ENCODE measurements at regions of chr19 and their contacts with region 1.

Region 1: DNA sequence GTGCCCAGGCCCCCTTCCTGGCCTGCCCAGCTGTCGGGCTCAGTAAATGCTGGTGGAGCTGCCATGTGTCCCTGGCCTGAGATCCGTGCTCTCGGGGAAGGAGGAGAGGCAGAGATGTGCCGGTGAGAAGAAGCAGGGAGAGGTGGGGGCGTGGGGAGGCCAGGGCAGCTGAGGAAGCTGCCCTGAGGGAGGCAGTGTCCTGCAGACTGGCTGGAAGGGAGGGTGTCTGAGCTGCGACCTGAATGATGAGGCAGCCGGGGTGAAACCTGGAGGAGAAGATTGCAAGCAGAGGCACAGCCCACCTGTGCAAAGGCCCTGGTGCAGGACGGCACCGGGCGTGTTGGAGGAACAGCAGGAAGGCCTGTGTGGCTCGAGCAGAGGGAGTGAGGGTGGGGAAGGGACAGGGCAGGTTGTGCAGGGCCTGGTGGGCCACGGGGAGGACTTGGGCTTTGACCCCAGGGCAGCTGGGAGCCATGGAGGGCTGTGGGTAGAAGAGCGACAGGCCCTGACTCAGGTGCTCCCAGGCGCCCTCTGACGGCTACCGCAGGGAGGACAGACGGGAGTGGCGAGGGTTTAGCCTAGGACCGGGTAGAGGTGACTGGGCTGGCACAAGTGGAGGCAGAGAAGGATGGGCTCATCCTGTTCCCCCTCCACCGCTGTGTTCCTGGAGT is 14.0 kb upstream of the CELF5 start:
- DNase-seq: peak; percentile 35 to 60
- ATAC-seq: peak; percentile 78 to 86
- H3K4me3 ChIP-seq: no peak overlapping the region
- H3K27ac ChIP-seq: no peak overlapping the region
- H3K4me1 ChIP-seq: no peaks in the 10 kb centered on the region
- CTCF ChIP-seq: peak; percentile 43
- EP300 ChIP-seq: no peak
- POLR2A ChIP-seq: no peak
- RAD21 ChIP-seq: peak in 1 of 2 experiments; percentile 29; a peak in 1 of 5 replicates

Region 2: GRCh38 chr19:3146677-3147100 is 63.8 kb before region 1 on chr19:
- CTCF ChIA-PET with region 1: no interaction called
- POLR2A ChIA-PET with region 1: no interaction called
- DNase-seq: no peak
- ATAC-seq: peak in 1 of 2 experiments; percentile 67; a peak in 3 of 6 replicates
- H3K4me3 ChIP-seq: no peak overlapping the region
- H3K27ac ChIP-seq: no peak overlapping the region
- H3K4me1 ChIP-seq: peaks cover 13% of the 10 kb centered on the region
- CTCF ChIP-seq: peak; percentile 55
- EP300 ChIP-seq: no peak
- POLR2A ChIP-seq: no peak
- RAD21 ChIP-seq: no peak; a peak in 1 of 5 replicates

Region 3: GRCh38 chr19:3224346-3225168 is 14.1 kb after region 1 on chr19 and contains the start of gene CELF5:
- CTCF ChIA-PET with region 1: interaction called, 13 read pairs
- POLR2A ChIA-PET with region 1: no interaction called
- DNase-seq: peak in 1 of 2 experiments; percentile 35
- ATAC-seq: peak; percentile 24 to 32; a peak in 3 of 6 replicates
- H3K4me3 ChIP-seq: peak within 1 kb of the TSS; percentile 56
- H3K27ac ChIP-seq: peak within 1 kb of the TSS in 1 of 2 experiments; percentile 84; a peak in 3 of 6 replicates
- H3K4me1 ChIP-seq: peaks cover 3% of the 10 kb centered on the region; the same call in 1 of the 3 replicates
- CTCF ChIP-seq: peak; percentile 76
- EP300 ChIP-seq: no peak
- POLR2A ChIP-seq: no peak
- RAD21 ChIP-seq: peak in 1 of 2 experiments; percentile 30; a peak in 1 of 5 replicates
- polyA plus RNA-seq, gene CELF5: 0.31 and 0.42 TPM in 2 replicates